ENCODE measurements at regions of chr9 and their contacts with region 1.

Region 1: GRCh38 chr9:6739218-6739617 is 18.6 kb upstream of the KDM4C start:
- DNase-seq: no peak
- H3K4me3 ChIP-seq: no peak overlapping the region
- H3K27ac ChIP-seq: no peak overlapping the region
- H3K4me1 ChIP-seq: no peaks in the 10 kb centered on the region
- H3K27me3 ChIP-seq: no peaks in the 10 kb centered on the region
- CTCF ChIP-seq: no peak
- EP300 ChIP-seq: no peak
- POLR2A ChIP-seq: no peak
- RAD21 ChIP-seq: peak; percentile 47 to 52

Region 2: DNA sequence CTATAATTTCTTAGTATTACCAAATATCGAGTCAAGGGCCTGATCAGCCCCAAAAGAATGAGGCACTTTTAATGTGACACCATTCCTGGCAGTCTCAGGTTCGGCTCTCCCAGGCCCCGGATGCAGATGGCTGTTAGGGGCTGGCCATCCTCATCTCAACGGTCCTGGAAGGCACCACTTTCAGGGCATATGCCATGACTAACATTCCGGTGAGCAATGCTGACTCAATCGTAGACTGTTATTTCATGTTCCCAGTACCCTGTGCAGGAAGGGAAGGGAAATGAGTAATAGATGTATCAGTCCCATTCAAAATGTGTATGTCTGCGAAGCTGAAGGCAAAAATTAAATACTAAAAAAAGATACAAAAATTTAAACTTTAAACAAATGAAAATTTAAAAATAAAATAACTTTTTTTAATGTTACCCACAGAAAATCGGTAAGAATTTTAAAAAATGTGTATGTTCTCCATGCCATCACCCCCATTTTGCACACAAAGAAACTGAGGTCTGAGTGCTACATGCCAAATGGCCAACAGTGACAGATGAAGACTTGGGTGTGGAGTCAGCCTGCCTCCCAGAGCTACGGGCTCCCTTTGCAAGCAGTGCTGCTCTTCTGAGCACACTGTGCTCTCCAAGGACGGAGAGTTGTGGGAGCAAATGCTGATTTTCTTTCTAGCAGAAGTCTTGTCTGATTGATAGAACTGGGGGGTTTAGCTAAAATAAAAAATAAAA is 172.6 kb before region 1 on chr9:
- CTCF ChIA-PET with region 1: no interaction called
- POLR2A ChIA-PET with region 1: no interaction called
- DNase-seq: peak in 1 of 2 experiments; percentile 2
- H3K4me3 ChIP-seq: no peak overlapping the region
- H3K27ac ChIP-seq: no peak overlapping the region
- H3K4me1 ChIP-seq: no peaks in the 10 kb centered on the region
- H3K27me3 ChIP-seq: no peaks in the 10 kb centered on the region
- CTCF ChIP-seq: no peak
- EP300 ChIP-seq: no peak
- POLR2A ChIP-seq: no peak
- RAD21 ChIP-seq: no peak

Region 3: DNA sequence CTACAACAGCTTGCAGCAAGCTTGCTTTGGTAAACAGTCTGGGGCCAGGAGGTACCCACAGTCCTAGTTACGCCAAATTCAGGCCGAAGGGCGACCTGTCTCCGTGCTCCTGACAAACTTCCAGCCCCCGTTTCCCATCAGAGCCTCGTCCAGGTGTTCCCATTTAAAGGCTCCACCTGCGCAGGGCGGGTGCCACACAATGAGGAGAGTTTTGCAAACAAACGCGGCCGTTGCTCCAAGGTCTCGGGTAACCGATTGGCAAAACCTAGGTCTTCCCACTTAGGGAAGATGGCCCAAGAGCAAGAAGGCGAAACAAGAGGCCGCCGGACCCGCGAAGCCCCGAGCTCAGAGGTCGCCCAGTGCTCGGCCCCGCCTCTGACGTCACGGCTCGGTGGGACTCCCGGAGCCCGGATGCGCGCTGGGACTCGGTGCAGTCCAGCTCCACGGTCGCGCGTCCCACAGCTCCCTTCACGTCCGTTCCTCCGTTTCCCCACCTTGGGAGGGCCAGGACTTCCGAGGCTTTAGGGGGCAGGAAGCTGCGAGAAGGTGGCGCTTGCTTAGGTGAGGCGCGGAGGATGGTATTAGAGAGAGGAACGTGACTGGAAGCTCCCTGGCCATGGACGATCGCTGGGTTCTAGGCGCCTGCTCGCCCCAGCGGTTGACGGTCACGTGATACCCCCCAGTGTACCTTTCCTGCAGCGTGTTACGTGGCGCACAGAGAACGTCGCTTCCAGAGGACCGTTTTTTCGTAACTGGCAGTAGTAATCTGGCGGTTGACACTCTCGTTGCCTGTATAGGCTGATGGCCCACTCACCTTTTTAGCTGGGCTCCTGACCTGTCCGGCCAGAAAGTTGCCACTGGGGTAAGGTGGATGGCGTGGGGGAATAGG is 23.2 kb before region 1 on chr9:
- CTCF ChIA-PET with region 1: interaction called, 10 read pairs
- POLR2A ChIA-PET with region 1: no interaction called
- DNase-seq: no peak
- H3K4me3 ChIP-seq: no peak overlapping the region
- H3K27ac ChIP-seq: no peak overlapping the region
- H3K4me1 ChIP-seq: peaks cover 0 to 3% (median 0%) of the 10 kb centered on the region in 4 experiments; a peak in 1 of 7 replicates
- H3K27me3 ChIP-seq: no peaks in the 10 kb centered on the region
- CTCF ChIP-seq: no peak
- EP300 ChIP-seq: no peak
- POLR2A ChIP-seq: no peak
- RAD21 ChIP-seq: no peak

Region 4: DNA sequence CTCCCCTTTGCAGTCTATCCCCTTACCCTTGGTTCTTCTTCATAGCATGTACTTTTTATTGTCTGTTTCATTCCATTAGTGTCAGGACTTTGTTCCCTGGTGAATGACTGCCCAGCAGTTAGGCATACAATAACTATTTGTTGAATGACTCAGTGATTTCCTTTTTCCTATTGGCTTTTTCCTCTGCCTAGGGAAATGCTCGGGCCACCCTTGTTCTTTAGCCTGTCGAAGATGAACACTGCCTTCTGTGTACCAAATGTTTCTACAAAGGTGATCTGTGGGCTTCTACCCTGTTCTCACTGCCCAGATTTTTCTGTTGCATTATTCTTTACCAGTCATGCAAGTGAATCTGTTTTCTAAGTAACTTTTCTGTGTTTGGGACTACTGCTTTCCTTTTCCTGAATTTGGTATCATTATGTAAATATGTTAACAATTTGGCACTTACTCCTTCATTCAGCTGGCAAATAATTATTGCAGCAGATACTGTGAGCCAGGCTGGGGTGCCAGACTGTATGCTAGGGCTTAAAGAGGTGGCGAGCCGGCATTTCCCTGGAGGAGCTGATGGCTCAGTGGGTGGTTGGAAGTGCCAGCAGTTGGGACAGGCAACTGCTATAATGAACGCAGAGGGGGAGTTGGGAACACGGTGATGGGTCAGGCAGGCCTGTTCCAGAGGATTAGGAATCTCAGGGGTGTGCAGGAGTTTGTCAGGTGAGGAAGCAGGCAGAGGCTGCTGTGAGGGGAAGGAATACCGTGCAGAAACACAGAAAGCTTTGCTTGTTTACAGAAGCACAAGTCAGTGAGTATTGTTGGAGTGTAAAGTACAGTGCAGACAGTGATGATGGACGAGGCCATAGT is 49.2 kb after region 1 on chr9:
- CTCF ChIA-PET with region 1: no interaction called
- POLR2A ChIA-PET with region 1: no interaction called
- DNase-seq: no peak
- H3K4me3 ChIP-seq: no peak overlapping the region
- H3K27ac ChIP-seq: no peak overlapping the region
- H3K4me1 ChIP-seq: peaks cover 4 to 17% (median 11%) of the 10 kb centered on the region in 4 experiments
- H3K27me3 ChIP-seq: no peaks in the 10 kb centered on the region
- CTCF ChIP-seq: no peak
- EP300 ChIP-seq: no peak
- POLR2A ChIP-seq: no peak
- RAD21 ChIP-seq: no peak

Region 5: GRCh38 chr9:6842584-6842947 is 103.3 kb after region 1 on chr9:
- CTCF ChIA-PET with region 1: no interaction called
- POLR2A ChIA-PET with region 1: no interaction called
- DNase-seq: no peak
- H3K4me3 ChIP-seq: no peak overlapping the region
- H3K27ac ChIP-seq: no peak overlapping the region
- H3K4me1 ChIP-seq: peaks cover 0 to 6% (median 3%) of the 10 kb centered on the region in 4 experiments; a peak in 3 of 7 replicates
- H3K27me3 ChIP-seq: no peaks in the 10 kb centered on the region
- CTCF ChIP-seq: no peak
- EP300 ChIP-seq: no peak
- POLR2A ChIP-seq: no peak
- RAD21 ChIP-seq: no peak